Caco-2 (cell line): ENCODE measurements at regions of chr14 and their contacts with region 1.

Region 1: GRCh38 chr14:67599698-67600561 is at the start of gene PIGH:
- DNase-seq: peak; percentile 92 to 96
- H3K4me3 ChIP-seq: peak within 1 kb of the TSS; percentile 95
- H3K4me3 Mint-ChIP-seq: peak within 1 kb of the TSS; percentile 88
- H3K27ac Mint-ChIP-seq: peak within 1 kb of the TSS; percentile 87
- H3K4me1 ChIP-seq: peaks cover 8% of the 10 kb centered on the region; the same call in 1 of the 2 replicates
- H3K4me1 Mint-ChIP-seq: peaks cover 6% of the 10 kb centered on the region
- H3K27me3 ChIP-seq: no peaks in the 10 kb centered on the region
- H3K27me3 Mint-ChIP-seq: no peaks in the 10 kb centered on the region
- CTCF ChIP-seq: peak; percentile 80 to 85
- total RNA-seq, gene PIGH: 16.9 and 20.4 TPM in 2 replicates

Region 2: DNA sequence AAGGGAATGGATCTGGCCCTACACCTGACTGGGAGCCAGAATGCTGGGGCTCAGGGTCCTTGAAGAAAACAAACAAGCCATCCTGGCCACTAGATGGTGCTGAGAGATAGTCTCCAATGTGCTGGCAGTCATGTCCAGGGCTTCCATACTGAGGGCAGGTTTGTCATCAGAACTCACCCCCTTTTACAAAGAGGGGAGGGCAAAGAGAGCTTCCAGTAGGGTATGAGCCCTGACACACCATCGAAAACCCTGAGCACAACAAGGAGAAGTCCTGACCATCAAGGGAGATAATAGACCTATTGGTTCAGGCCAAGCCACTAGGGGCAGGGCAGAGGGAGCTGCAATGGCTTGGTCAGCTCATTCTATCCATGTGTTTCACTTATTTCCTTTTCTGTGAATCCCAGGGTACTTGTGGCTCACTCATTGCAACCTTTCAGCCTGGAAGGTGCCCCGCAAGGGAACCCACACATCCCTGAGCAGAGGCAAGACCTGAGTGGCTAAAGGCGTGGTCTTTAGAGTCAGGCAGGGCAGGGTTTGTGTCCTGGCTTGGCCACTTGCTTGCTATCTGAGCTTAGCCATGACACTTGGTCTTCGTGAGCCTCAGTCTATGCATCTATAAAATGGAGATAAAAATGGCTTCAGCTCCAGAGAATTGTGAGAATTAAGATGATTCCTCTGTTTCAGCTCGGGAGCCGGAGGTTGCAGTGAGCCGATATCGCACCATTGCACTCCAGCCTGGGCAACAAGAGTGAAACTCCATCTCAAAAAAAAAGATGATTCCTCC is 73.1 kb before region 1 on chr14:
- CTCF ChIA-PET with region 1: interaction called, 17 read pairs
- POLR2A ChIA-PET with region 1: interaction called, 12 read pairs
- intact Hi-C with region 1: no loop called
- DNase-seq: peak; percentile 72 to 76
- H3K4me3 ChIP-seq: no peak overlapping the region
- H3K4me3 Mint-ChIP-seq: no peak overlapping the region
- H3K27ac Mint-ChIP-seq: peak overlapping the region; percentile 19
- H3K4me1 ChIP-seq: no peaks in the 10 kb centered on the region; the same call in 1 of the 2 replicates
- H3K4me1 Mint-ChIP-seq: no peaks in the 10 kb centered on the region
- H3K27me3 ChIP-seq: no peaks in the 10 kb centered on the region
- H3K27me3 Mint-ChIP-seq: no peaks in the 10 kb centered on the region
- CTCF ChIP-seq: peak; percentile 67 to 90

Region 3: DNA sequence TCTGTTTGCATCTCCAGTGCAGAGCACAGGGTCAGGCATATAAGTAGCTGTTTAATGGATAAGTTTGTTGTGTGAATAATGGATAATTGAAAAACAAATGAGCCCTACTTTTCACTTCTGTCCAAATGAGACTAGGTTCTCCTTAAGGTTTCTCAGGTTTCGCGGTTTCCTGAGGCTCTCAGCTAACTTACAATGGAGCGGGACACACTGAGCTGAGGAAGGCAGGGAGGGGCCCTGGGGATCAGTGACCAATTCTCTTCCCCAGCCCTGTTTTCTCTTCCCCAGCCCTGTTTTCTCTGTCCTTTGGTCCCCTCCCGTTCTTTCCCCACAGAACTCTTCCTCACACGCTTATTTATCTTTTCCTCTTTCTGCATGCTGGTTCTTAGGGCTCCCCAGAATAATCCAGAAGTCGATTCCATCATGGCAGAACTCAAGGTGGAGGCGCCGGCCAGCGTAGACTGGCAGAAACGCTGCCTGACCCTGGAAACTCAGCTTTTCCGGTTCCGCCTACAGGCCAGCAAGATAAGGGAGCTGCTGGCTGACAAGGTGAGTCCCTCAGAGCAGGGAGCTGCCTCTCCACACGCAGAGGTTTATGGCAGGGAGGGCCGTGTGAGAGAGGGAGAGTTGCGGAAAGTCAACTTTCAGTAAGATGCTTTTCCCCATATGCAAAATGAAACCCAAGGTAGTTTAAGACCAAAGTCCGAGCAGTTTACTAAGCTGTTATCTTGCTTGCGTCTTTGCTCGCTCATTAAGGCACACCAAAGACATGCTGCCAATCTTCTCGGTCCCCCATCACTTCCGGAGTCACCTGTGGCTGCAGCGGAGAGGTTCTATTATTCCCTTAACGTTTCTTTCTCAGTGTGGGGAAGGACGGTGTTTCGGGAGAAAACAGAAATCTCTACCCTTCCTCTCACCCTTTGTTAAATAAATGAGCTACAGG is 58.2 kb before region 1 on chr14:
- CTCF ChIA-PET with region 1: interaction called, 6 read pairs
- POLR2A ChIA-PET with region 1: interaction called, 12 read pairs
- intact Hi-C with region 1: no loop called
- DNase-seq: peak; percentile 83 to 91
- H3K4me3 ChIP-seq: peak overlapping the region; percentile 37
- H3K4me3 Mint-ChIP-seq: peak overlapping the region; percentile 84
- H3K27ac Mint-ChIP-seq: peak overlapping the region; percentile 95
- H3K4me1 ChIP-seq: peaks cover 7% of the 10 kb centered on the region; the same call in 1 of the 2 replicates
- H3K4me1 Mint-ChIP-seq: peaks cover 7% of the 10 kb centered on the region
- H3K27me3 ChIP-seq: no peaks in the 10 kb centered on the region
- H3K27me3 Mint-ChIP-seq: no peaks in the 10 kb centered on the region
- CTCF ChIP-seq: no peak

Region 4: GRCh38 chr14:67610491-67610890 is 10.6 kb after region 1 on chr14:
- CTCF ChIA-PET with region 1: interaction called, 10 read pairs
- POLR2A ChIA-PET with region 1: no interaction called
- intact Hi-C with region 1: no loop called
- DNase-seq: no peak
- H3K4me3 ChIP-seq: no peak overlapping the region
- H3K4me3 Mint-ChIP-seq: no peak overlapping the region
- H3K27ac Mint-ChIP-seq: no peak overlapping the region
- H3K4me1 ChIP-seq: no peaks in the 10 kb centered on the region
- H3K4me1 Mint-ChIP-seq: no peaks in the 10 kb centered on the region
- H3K27me3 ChIP-seq: no peaks in the 10 kb centered on the region
- H3K27me3 Mint-ChIP-seq: peaks cover 2% of the 10 kb centered on the region
- CTCF ChIP-seq: no peak

Region 5: GRCh38 chr14:67666750-67667449 is 67.0 kb after region 1 on chr14:
- CTCF ChIA-PET with region 1: interaction called, 19 read pairs
- POLR2A ChIA-PET with region 1: interaction called, 3 read pairs
- intact Hi-C with region 1: no loop called
- DNase-seq: peak in 1 of 2 experiments; percentile 45
- H3K4me3 ChIP-seq: no peak overlapping the region
- H3K4me3 Mint-ChIP-seq: no peak overlapping the region
- H3K27ac Mint-ChIP-seq: no peak overlapping the region
- H3K4me1 ChIP-seq: no peaks in the 10 kb centered on the region
- H3K4me1 Mint-ChIP-seq: no peaks in the 10 kb centered on the region
- H3K27me3 ChIP-seq: no peaks in the 10 kb centered on the region
- H3K27me3 Mint-ChIP-seq: no peaks in the 10 kb centered on the region
- CTCF ChIP-seq: peak; percentile 58 to 62

Region 6: GRCh38 chr14:67704484-67705089 is 104.7 kb after region 1 on chr14:
- CTCF ChIA-PET with region 1: interaction called, 33 read pairs
- POLR2A ChIA-PET with region 1: interaction called, 5 read pairs
- intact Hi-C with region 1: no loop called
- DNase-seq: peak in 1 of 2 experiments; percentile 64
- H3K4me3 ChIP-seq: no peak overlapping the region
- H3K4me3 Mint-ChIP-seq: no peak overlapping the region
- H3K27ac Mint-ChIP-seq: no peak overlapping the region
- H3K4me1 ChIP-seq: no peaks in the 10 kb centered on the region
- H3K4me1 Mint-ChIP-seq: no peaks in the 10 kb centered on the region
- H3K27me3 ChIP-seq: no peaks in the 10 kb centered on the region
- H3K27me3 Mint-ChIP-seq: no peaks in the 10 kb centered on the region
- CTCF ChIP-seq: peak; percentile 73 to 78

Region 7: GRCh38 chr14:67738740-67739504 is 139.0 kb after region 1 on chr14:
- CTCF ChIA-PET with region 1: no interaction called
- POLR2A ChIA-PET with region 1: no interaction called
- intact Hi-C with region 1: no loop called
- DNase-seq: peak; percentile 49 to 64
- H3K4me3 ChIP-seq: no peak overlapping the region
- H3K4me3 Mint-ChIP-seq: peak overlapping the region; percentile 13
- H3K27ac Mint-ChIP-seq: peak overlapping the region; percentile 26
- H3K4me1 ChIP-seq: peaks cover 19% of the 10 kb centered on the region
- H3K4me1 Mint-ChIP-seq: peaks cover 26% of the 10 kb centered on the region
- H3K27me3 ChIP-seq: no peaks in the 10 kb centered on the region
- H3K27me3 Mint-ChIP-seq: no peaks in the 10 kb centered on the region
- CTCF ChIP-seq: no peak